Activated CD8-positive, alpha-beta T cell treated with anti-CD3 and anti-CD28 coated beads for 36 hours (primary cell): ENCODE measurements at regions of chr3 and their contacts with region 1.

Region 1: DNA sequence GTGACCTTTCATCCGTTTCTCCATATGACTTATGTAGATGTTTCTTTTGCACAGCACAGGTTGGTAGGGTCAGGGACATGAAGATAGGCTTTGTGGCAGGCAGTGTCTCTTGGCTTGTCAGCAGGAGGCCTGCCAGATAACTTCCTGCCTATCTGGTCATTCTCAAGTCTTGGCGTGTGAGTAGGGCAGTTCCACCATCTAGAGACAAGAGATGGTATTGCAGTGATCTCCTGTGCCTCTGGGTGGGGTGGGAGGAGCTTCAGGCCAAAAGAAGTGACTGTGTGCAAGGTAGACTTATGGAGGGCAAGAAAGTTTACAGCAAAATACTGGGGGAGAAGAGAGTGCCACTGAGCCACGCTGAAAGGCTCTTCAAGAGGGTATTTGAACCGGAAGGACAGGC is 11.0 kb downstream of the TEX264 start:
- DNase-seq: peak; percentile 87
- ATAC-seq: peak; percentile 90
- H3K4me3 Mint-ChIP-seq: no peak overlapping the region
- H3K27ac Mint-ChIP-seq: peak overlapping the region; percentile 68
- H3K4me1 Mint-ChIP-seq: peaks cover 89% of the 10 kb centered on the region
- H3K27me3 Mint-ChIP-seq: no peaks in the 10 kb centered on the region
- CTCF ChIP-seq: peak; percentile 92

Region 2: DNA sequence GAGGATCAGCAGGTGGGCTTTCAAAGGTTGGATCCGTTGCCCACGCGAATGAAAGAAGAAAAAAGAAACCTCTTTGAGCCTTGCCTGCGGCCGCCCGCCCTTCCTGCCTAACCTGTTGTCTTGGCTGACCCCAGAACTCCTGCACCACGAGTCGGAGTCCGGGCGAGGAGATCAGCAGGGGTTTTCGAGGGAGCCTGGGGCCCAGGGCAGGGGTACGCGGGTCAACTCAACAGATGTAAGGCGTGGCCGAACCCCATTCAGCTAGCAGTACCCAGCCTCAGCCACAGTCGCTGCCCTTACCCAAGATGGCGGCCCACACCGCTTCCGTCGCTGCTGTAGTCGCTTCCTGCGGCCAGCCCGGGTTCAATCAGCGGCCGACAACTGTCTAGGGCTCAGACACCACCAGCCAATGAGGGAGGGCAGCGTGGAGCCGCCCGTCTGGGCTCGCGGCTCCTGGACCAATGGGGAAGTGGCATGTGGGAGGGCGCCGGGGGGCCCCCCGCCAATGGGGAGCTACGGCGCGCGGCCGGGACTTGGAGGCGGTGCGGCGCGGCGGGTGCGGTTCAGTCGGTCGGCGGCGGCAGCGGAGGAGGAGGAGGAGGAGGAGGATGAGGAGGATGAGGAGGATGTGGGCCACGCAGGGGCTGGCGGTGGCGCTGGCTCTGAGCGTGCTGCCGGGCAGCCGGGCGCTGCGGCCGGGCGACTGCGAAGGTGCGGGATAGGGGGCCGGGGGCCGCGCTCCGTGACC is 297.2 kb before region 1 on chr3 and contains the start of gene MANF:
- CTCF ChIA-PET with region 1: interaction called, 11 read pairs
- POLR2A ChIA-PET with region 1: no interaction called
- intact Hi-C with region 1: loop called (anchors 10 kb)
- DNase-seq: peak; percentile 99
- ATAC-seq: peak; percentile 96
- H3K4me3 Mint-ChIP-seq: peak within 1 kb of the TSS; percentile 88
- H3K27ac Mint-ChIP-seq: peak within 1 kb of the TSS; percentile 97
- H3K4me1 Mint-ChIP-seq: peaks cover 43% of the 10 kb centered on the region
- H3K27me3 Mint-ChIP-seq: no peaks in the 10 kb centered on the region
- CTCF ChIP-seq: no peak
- total RNA-seq, gene MANF: 107 to 109 TPM

Region 3: DNA sequence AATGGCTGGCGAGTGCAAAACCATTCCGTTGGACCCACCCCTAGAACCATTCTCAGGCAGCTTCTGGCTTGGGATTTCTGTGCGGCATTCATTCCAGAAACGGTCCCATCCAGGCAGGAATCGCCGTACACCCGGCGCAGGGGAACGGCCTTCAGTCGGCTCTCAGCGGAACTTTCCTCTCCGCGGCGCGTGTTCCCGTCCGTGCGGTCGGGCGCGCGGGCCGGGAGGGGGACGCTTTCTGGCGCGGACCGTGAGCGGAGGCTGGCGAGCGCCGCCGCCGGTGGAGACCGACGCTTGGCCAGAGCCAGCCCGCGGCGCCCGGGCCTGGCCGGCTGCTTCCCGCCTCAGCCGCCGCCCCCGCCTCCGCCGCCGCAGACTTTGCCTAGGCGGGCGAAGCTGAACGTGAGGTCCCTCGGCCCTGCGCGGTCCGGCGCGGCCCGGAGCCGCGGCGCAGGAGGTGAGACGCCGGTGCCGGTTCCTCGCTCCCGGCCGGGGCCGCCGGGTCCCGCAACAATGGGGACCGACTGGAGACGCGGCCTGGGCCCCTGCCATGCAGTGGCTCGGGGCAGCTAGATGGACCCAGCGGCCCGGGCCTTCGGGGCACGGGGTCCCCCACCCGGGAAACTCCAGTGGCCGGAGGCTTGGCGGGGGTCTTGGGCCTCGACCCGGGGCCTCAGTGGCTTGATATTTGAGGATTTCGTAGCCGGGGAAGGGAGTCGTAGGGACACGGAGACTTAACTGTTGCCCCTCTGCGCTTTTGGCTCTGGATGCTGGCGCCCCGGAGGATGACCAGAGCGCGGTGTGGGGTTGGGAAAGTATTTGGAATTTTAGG is 143.4 kb before region 1 on chr3 and contains the start of gene RAD54L2:
- CTCF ChIA-PET with region 1: interaction called, 13 read pairs
- POLR2A ChIA-PET with region 1: interaction called, 3 read pairs
- intact Hi-C with region 1: no loop called
- DNase-seq: peak; percentile 75
- ATAC-seq: peak; percentile 87
- H3K4me3 Mint-ChIP-seq: peak within 1 kb of the TSS; percentile 83
- H3K27ac Mint-ChIP-seq: peak within 1 kb of the TSS; percentile 89
- H3K4me1 Mint-ChIP-seq: peaks cover 22% of the 10 kb centered on the region
- H3K27me3 Mint-ChIP-seq: no peaks in the 10 kb centered on the region
- CTCF ChIP-seq: peak; percentile 30
- total RNA-seq, gene RAD54L2: 24.1 to 24.6 TPM

Region 4: GRCh38 chr3:51670823-51671733 is 11.0 kb before region 1 on chr3 and contains the start of gene TEX264:
- CTCF ChIA-PET with region 1: interaction called, 120 read pairs
- POLR2A ChIA-PET with region 1: interaction called, 16 read pairs
- intact Hi-C with region 1: no loop called
- DNase-seq: peak; percentile 89
- ATAC-seq: peak; percentile 68
- H3K4me3 Mint-ChIP-seq: peak within 1 kb of the TSS; percentile 85
- H3K27ac Mint-ChIP-seq: peak within 1 kb of the TSS; percentile 86
- H3K4me1 Mint-ChIP-seq: peaks cover 59% of the 10 kb centered on the region
- H3K27me3 Mint-ChIP-seq: no peaks in the 10 kb centered on the region
- CTCF ChIP-seq: no peak
- total RNA-seq, gene TEX264: 24.9 to 26.0 TPM

Region 5: GRCh38 chr3:51799879-51800749 is 118.0 kb after region 1 on chr3:
- CTCF ChIA-PET with region 1: interaction called, 14 read pairs
- POLR2A ChIA-PET with region 1: no interaction called
- intact Hi-C with region 1: no loop called
- DNase-seq: peak; percentile 43
- ATAC-seq: peak; percentile 50
- H3K4me3 Mint-ChIP-seq: no peak overlapping the region
- H3K27ac Mint-ChIP-seq: no peak overlapping the region
- H3K4me1 Mint-ChIP-seq: peaks cover 35% of the 10 kb centered on the region
- H3K27me3 Mint-ChIP-seq: peaks cover 16% of the 10 kb centered on the region
- CTCF ChIP-seq: peak; percentile 84

Region 6: GRCh38 chr3:51929420-51930003 is 247.4 kb after region 1 on chr3:
- CTCF ChIA-PET with region 1: no interaction called
- POLR2A ChIA-PET with region 1: no interaction called
- intact Hi-C with region 1: no loop called
- DNase-seq: no peak
- ATAC-seq: no peak
- H3K4me3 Mint-ChIP-seq: no peak overlapping the region
- H3K27ac Mint-ChIP-seq: no peak overlapping the region
- H3K4me1 Mint-ChIP-seq: no peaks in the 10 kb centered on the region
- H3K27me3 Mint-ChIP-seq: no peaks in the 10 kb centered on the region
- CTCF ChIP-seq: no peak